Activated naive CD4-positive, alpha-beta T cell treated with anti-CD3 and anti-CD28 coated beads for 36 hours (primary cell): ENCODE measurements at regions of chr17 and their contacts with region 1.

Region 1: GRCh38 chr17:75238684-75239191 is 22.7 kb downstream of the GGA3 start:
- DNase-seq: peak; percentile 69
- H3K4me3 Mint-ChIP-seq: no peak overlapping the region
- H3K27ac Mint-ChIP-seq: peak overlapping the region; percentile 81
- H3K4me1 Mint-ChIP-seq: peaks cover 37% of the 10 kb centered on the region
- H3K27me3 Mint-ChIP-seq: no peaks in the 10 kb centered on the region

Region 2: GRCh38 chr17:75159191-75160031 is 79.3 kb before region 1 on chr17:
- CTCF ChIA-PET with region 1: no interaction called
- intact Hi-C with region 1: no loop called
- DNase-seq: peak; percentile 32
- H3K4me3 Mint-ChIP-seq: no peak overlapping the region
- H3K27ac Mint-ChIP-seq: no peak overlapping the region
- H3K4me1 Mint-ChIP-seq: peaks cover 16% of the 10 kb centered on the region
- H3K27me3 Mint-ChIP-seq: no peaks in the 10 kb centered on the region

Region 3: DNA sequence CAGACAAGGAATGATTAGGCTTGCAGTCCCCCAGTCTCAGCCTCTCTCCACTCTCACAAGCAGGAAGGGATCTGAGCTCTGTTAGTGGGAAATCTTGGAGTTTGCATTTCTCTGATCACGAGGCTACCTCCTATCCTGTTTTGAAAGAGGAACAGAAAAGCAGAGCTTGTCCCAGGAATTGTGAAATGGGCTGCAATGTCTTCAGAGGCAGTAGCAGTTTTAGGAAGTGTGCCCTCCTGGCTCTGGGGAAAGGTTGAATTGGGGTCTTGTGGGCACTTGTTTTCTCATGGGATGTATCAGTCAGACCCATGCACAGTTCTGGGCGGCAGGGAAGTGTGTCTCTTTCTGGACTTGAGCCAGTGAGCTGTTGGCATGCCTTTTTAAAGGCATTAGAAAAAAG is 10.4 kb before region 1 on chr17:
- CTCF ChIA-PET with region 1: interaction called, 36 read pairs
- intact Hi-C with region 1: no loop called
- DNase-seq: no peak
- H3K4me3 Mint-ChIP-seq: no peak overlapping the region
- H3K27ac Mint-ChIP-seq: no peak overlapping the region
- H3K4me1 Mint-ChIP-seq: peaks cover 8% of the 10 kb centered on the region
- H3K27me3 Mint-ChIP-seq: no peaks in the 10 kb centered on the region

Region 4: GRCh38 chr17:75250009-75250471 is 11.3 kb after region 1 on chr17:
- CTCF ChIA-PET with region 1: interaction called, 41 read pairs
- intact Hi-C with region 1: no loop called
- DNase-seq: peak; percentile 90
- H3K4me3 Mint-ChIP-seq: peak overlapping the region; percentile 61
- H3K27ac Mint-ChIP-seq: peak overlapping the region; percentile 93
- H3K4me1 Mint-ChIP-seq: peaks cover 74% of the 10 kb centered on the region
- H3K27me3 Mint-ChIP-seq: no peaks in the 10 kb centered on the region

Region 5: DNA sequence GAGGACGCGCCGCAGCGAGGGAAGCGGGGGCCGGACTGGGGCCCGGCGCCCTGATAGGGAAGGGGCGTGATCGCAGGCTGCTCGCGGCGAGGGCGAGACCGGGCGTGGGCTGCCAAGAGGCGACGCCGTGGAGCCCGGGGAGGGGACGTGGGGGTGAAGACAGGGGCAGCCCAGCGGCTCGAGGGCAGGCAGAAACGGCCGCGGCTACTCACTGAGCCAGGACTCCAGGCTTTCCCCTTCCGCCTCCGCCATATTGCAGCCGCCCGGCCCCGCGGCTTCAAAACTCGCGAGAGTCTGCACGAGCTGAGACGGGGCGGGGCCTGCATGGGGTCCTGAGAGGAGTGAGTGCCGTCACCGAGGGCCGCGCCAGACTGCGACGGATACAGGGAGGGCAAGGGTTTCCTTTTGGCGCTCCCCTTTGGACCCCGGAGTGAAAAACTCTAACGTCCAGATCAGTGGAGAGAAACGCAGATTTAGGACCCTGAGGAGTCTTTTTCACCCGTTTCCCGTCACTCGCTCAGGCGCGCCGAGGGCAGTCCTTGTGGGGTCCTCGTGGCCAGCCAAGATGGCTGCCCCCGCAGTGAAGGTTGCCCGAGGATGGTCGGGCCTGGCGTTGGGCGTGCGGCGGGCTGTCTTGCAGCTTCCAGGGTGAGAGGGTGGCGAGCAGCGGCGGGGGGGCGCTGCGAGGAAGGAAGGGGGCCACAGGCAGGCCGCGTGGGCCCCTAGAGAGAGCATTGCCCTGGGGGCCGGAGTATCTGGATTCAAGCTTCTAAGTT is 22.8 kb after region 1 on chr17 and contains the starts of genes GGA3 and MRPS7:
- CTCF ChIA-PET with region 1: interaction called, 39 read pairs
- intact Hi-C with region 1: no loop called
- DNase-seq: peak; percentile 98
- H3K4me3 Mint-ChIP-seq: peak within 1 kb of the TSS; percentile 93
- H3K27ac Mint-ChIP-seq: peak within 1 kb of the TSS; percentile 99
- H3K4me1 Mint-ChIP-seq: peaks cover 53% of the 10 kb centered on the region
- H3K27me3 Mint-ChIP-seq: no peaks in the 10 kb centered on the region
- total RNA-seq, gene GGA3: 65.7 to 66.1 TPM
- total RNA-seq, gene MRPS7: 73.3 to 78.3 TPM

Region 6: GRCh38 chr17:75271233-75271954 is 32.7 kb after region 1 on chr17:
- CTCF ChIA-PET with region 1: interaction called, 38 read pairs
- intact Hi-C with region 1: loop called (anchors 1 kb)
- DNase-seq: peak; percentile 83
- H3K4me3 Mint-ChIP-seq: peak overlapping the region; percentile 76
- H3K27ac Mint-ChIP-seq: peak overlapping the region; percentile 70
- H3K4me1 Mint-ChIP-seq: peaks cover 35% of the 10 kb centered on the region
- H3K27me3 Mint-ChIP-seq: no peaks in the 10 kb centered on the region

Region 7: GRCh38 chr17:76337413-76337777 is 1098.7 kb after region 1 on chr17:
- CTCF ChIA-PET with region 1: no interaction called
- intact Hi-C with region 1: no loop called
- DNase-seq: no peak
- H3K4me3 Mint-ChIP-seq: no peak overlapping the region
- H3K27ac Mint-ChIP-seq: no peak overlapping the region
- H3K4me1 Mint-ChIP-seq: peaks cover 3% of the 10 kb centered on the region
- H3K27me3 Mint-ChIP-seq: no peaks in the 10 kb centered on the region